Heart right ventricle (tissue), 16 donors: ENCODE measurements at regions of chr5 and their contacts with region 1.

Region 1: DNA sequence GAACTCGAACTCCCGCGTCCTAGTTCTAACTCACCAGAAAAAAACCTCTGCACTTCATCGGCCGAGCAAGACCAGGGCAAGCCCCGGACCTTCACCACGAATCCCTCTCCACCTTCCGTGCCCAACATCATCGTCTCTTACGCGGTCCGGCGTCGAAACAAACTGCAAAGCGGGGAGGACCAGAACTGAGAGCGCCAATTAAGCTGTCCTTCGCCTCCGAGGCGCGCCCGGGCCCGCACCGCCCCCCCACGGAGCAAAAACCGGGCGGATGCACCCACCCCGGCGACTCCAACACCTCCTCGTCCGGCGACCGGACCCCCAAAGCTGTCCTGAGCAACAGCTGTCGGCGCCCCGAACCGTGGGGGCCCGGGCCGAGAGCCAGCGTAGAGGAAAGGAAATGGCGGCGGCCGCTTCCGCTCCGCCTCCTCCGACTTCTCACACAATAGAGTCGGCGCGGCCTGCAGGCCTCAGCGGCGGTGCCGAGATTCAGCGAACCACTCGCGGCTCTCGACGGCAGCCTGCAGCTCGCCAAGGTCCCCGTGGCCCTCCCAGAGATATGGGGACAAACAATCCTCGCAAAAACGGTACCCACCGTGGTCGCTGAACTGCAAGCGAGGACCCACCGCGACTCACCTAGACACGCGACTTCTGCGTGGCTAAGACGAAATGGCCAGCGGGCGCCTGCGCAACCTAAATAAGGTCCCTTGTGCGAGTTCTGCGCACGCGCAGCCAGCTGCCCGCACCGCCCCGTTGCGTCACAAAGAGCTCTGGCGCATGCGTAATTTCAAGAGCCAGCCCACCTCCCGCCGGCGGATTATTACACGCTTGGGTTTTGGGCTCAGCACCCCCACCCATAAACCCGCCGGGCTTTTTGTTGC is at the start of gene HNRNPH1:
- DNase-seq: peak; percentile 98
- ATAC-seq: peak; percentile 90 to 95 (median 90)
- H3K4me3 ChIP-seq: peak within 1 kb of the TSS; percentile 77 to 98 (median 90)
- H3K27ac ChIP-seq: peak within 1 kb of the TSS; percentile 97 to 100 (median 100)
- H3K4me1 ChIP-seq: peaks cover 14 to 54% (median 51%) of the 10 kb centered on the region in 9 donors
- H3K27me3 ChIP-seq: no peaks in the 10 kb centered on the region
- CTCF ChIP-seq: peak in 2 of 9 donors; percentile 2 to 4
- total RNA-seq, gene HNRNPH1: 147 to 227 (median 168) TPM

Region 2: DNA sequence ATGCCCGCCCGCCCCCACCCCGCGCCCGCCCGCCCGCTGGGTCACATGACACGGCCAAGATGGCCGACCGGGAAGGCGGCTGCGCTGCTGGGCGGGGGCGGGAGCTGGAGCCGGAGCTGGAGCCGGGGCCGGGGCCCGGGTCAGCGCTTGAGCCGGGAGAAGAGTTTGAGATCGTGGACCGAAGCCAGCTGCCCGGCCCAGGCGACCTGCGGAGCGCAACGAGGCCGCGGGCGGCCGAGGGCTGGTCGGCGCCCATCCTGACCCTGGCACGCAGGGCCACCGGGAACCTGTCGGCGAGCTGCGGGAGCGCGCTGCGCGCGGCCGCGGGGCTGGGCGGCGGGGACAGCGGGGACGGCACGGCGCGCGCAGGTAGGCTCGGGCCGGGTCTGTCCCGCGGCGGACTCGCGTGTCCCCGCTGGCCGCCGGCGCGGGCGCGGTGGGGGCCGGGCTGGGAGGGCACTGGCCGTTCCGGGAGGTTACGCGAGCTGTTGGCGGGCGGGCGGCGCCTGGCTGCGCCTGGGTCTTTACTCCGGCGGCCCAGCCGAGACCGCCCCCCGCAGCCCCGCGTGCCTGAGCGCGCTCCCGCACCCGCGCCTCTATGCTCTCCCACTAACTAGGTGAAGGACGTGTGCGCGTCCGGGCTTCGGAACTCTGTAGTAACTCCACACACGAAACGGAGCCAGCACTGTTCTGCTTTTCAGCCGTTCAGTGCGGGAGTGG is 72.6 kb before region 1 on chr5 and contains the start of gene RUFY1:
- intact Hi-C with region 1: loop called in 2 of 10 experiments (anchors 5 kb)
- DNase-seq: peak; percentile 81 to 86
- ATAC-seq: peak; percentile 81 to 92 (median 89)
- H3K4me3 ChIP-seq: peak within 1 kb of the TSS; percentile 56 to 99 (median 91)
- H3K27ac ChIP-seq: peak within 1 kb of the TSS; percentile 94 to 99 (median 98)
- H3K4me1 ChIP-seq: peaks cover 0 to 41% (median 30%) of the 10 kb centered on the region in 9 donors
- H3K27me3 ChIP-seq: no peaks in the 10 kb centered on the region
- CTCF ChIP-seq: no peak
- total RNA-seq, gene RUFY1: 17.0 to 28.1 (median 20.8) TPM

Region 3: DNA sequence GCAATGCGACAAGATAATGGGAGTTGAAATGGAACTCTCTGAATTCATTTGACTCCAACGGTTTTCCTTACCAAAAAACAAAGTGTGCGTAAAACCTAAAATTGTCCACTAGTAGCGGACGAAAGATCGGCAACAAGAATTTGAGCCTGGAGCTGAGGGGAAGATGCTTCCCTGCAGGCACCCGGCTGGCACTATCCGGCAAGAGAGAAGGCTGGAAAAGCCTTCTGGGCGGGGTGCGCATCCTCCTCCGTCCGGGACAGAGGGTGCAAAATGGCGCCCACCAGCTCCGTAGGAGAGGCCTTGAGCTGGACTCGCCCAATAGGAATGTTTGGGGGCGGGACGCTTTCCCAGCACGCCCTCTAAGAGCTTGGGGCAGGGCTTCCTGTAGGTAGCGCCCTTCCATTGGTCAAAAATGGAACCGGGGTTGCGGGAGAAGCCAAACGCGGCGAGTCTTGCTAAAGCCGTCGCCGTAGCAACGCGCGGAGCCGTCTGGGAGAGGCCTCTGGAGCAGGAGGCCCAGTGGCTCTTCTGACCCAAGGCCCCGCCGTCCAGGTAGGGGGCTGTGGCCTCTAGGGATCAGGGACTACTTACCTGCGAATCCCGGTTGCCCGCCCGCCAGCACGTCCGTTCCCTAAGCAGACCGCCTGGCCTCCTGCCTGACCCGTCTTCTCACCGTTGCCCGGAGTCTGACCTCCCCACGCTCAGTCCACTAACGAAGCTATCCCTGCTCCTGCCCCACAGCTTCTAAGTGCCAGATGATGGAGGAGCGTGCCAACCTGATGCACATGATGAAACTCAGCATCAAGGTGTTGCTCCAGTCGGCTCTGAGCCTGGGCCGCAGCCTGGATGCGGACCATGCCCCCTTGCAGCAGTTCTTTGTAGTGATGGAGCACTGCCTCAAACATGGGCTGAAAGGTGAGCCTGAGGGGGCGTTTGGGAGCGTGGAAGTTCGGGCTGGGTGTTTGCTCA is 63.7 kb before region 1 on chr5:
- intact Hi-C with region 1: loop called in 2 of 10 experiments (anchors 5 kb)
- DNase-seq: peak; percentile 95 to 99
- ATAC-seq: peak; percentile 99 to 100 (median 100)
- H3K4me3 ChIP-seq: peak overlapping the region in 9 of 10 donors; percentile 48 to 75 (median 61)
- H3K27ac ChIP-seq: peak overlapping the region; percentile 2 to 90 (median 85)
- H3K4me1 ChIP-seq: peaks cover 4 to 21% (median 13%) of the 10 kb centered on the region in 9 donors
- H3K27me3 ChIP-seq: no peaks in the 10 kb centered on the region
- CTCF ChIP-seq: peak in 2 of 9 donors; percentile 16 to 36